Ovary (tissue), 10 donors: ENCODE measurements at regions of chrX and their contacts with region 1.

Region 1: DNA sequence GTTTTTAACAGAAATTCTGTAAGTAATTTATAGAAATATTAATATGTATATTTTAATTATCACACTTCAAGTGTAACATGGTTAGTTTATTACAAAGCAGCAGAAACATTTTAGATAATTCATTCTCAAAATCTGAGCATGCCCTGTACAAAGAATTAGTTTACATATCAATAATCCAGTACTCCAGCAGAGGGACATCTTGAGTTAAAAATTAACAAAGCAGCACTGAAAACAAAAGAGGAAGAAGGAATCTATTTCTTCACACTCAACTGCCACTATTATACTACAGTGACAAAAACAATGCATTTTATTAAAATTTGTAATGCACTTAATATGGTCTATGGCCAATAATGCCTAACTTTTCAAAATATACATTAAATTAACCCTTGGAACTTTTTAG is 179.1 kb upstream of the KLHL4 start:
- DNase-seq: no peak
- H3K4me3 ChIP-seq: no peak overlapping the region
- H3K27ac ChIP-seq: no peak overlapping the region
- H3K4me1 ChIP-seq: no peaks in the 10 kb centered on the region
- H3K27me3 ChIP-seq: no peaks in the 10 kb centered on the region
- CTCF ChIP-seq: peak in 1 of 3 donors; percentile 34
- EP300 ChIP-seq: no peak
- POLR2A ChIP-seq: no peak

Region 2: DNA sequence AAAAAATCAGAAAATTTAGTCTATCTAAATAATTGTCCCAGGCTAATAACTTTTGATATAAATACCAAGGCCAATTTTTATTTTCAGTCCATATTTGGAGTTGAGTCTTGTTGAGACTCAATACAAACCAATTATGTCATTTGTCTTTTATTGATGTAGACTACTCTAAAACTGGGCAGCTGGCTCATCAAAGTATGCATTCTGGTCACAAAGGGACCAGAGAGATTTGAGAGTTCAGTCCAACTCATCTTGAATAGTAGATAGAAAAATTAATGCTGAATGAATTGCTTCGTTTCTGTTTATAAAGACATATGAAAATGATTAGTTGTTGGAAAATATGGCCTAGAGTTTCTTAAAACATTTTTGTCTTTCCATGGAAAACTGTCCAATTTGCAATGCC is 233.4 kb before region 1 on chrX:
- intact Hi-C with region 1: no loop called
- DNase-seq: no peak
- H3K4me3 ChIP-seq: no peak overlapping the region
- H3K27ac ChIP-seq: no peak overlapping the region
- H3K4me1 ChIP-seq: no peaks in the 10 kb centered on the region
- H3K27me3 ChIP-seq: no peaks in the 10 kb centered on the region
- CTCF ChIP-seq: no peak
- EP300 ChIP-seq: no peak
- POLR2A ChIP-seq: no peak

Region 3: DNA sequence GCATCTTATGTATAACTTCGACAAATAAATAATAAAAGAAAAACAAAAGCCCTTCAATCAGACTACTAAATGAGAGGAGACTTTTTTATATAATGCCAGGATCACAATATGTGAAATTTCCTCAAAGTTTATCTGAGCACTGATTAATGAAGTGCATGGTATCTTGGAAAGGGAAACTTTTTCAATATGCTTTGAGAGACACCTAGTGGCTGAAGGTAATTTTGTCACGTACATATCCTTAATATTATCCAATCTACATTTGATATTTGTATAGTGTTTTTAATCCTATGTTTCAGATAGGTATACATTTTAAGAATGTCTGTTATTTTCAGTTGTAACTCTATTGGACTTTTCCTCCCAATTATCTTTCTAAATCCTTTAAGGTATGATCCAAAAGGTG is 325.9 kb after region 1 on chrX:
- intact Hi-C with region 1: loop called (anchors 10 kb)
- DNase-seq: no peak
- H3K4me3 ChIP-seq: no peak overlapping the region
- H3K27ac ChIP-seq: no peak overlapping the region
- H3K4me1 ChIP-seq: no peaks in the 10 kb centered on the region
- H3K27me3 ChIP-seq: no peaks in the 10 kb centered on the region
- CTCF ChIP-seq: peak in 2 of 3 donors; percentile 28 to 37
- EP300 ChIP-seq: no peak
- POLR2A ChIP-seq: no peak